Activated naive CD4-positive, alpha-beta T cell treated with anti-CD3 and anti-CD28 coated beads for 36 hours (primary cell): ENCODE measurements at regions of chr9 and their contacts with region 1.

Region 1: GRCh38 chr9:121074635-121075385 is at the start of gene CNTRL:
- DNase-seq: peak; percentile 98
- H3K4me3 Mint-ChIP-seq: peak within 1 kb of the TSS; percentile 100
- H3K27ac Mint-ChIP-seq: peak within 1 kb of the TSS; percentile 94
- H3K4me1 Mint-ChIP-seq: peaks cover 47% of the 10 kb centered on the region
- H3K27me3 Mint-ChIP-seq: no peaks in the 10 kb centered on the region
- total RNA-seq, gene CNTRL: 59.4 to 63.6 TPM

Region 2: DNA sequence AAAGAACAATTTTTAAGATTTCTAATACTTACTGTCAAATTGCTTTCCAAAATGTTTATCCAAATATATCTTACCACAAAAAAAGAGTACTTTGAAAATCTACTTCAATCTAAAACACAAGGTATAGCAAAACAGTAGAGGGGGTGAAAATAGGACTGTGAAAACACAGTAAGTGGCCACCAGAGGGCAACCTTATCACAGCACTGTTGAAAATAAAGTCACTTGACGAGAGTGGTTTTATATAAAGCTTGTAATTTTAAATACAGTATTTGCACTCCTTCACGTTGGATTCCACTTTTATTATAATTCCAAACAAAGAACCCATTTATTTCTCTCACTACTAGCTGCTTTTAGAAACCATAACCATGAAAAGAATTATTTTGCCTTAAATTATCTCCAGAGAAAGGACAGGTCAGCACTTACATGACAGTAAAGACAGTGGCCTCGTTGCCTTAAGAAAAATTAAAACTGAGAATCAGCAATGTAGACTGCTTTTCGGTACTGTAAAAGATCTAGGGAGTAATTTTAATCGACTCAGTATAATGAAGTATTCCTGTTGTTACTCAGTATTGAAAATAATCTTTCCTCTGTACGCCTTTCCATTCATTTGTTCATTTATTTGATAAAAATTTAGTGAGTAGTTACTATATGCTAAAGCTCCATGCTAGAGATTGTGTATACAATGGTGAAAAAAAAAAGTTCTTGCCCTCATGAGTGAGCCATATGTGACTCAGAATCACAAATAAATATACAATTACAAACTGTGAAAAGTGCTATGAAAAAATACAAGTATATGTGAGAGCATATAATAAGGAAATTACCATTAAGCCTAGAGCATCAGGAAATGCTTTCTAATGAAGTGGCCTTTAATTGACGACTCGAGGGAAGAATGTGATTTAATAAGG is 454.8 kb before region 1 on chr9:
- CTCF ChIA-PET with region 1: interaction called, 3 read pairs
- intact Hi-C with region 1: loop called (anchors 10 kb)
- DNase-seq: peak; percentile 82
- H3K4me3 Mint-ChIP-seq: no peak overlapping the region
- H3K27ac Mint-ChIP-seq: no peak overlapping the region
- H3K4me1 Mint-ChIP-seq: peaks cover 3% of the 10 kb centered on the region
- H3K27me3 Mint-ChIP-seq: no peaks in the 10 kb centered on the region

Region 3: GRCh38 chr9:120868676-120869359 is 206.0 kb before region 1 on chr9:
- CTCF ChIA-PET with region 1: no interaction called
- intact Hi-C with region 1: loop called (anchors 1 kb)
- DNase-seq: peak; percentile 97
- H3K4me3 Mint-ChIP-seq: peak overlapping the region; percentile 74
- H3K27ac Mint-ChIP-seq: peak overlapping the region; percentile 87
- H3K4me1 Mint-ChIP-seq: peaks cover 49% of the 10 kb centered on the region
- H3K27me3 Mint-ChIP-seq: no peaks in the 10 kb centered on the region

Region 4: DNA sequence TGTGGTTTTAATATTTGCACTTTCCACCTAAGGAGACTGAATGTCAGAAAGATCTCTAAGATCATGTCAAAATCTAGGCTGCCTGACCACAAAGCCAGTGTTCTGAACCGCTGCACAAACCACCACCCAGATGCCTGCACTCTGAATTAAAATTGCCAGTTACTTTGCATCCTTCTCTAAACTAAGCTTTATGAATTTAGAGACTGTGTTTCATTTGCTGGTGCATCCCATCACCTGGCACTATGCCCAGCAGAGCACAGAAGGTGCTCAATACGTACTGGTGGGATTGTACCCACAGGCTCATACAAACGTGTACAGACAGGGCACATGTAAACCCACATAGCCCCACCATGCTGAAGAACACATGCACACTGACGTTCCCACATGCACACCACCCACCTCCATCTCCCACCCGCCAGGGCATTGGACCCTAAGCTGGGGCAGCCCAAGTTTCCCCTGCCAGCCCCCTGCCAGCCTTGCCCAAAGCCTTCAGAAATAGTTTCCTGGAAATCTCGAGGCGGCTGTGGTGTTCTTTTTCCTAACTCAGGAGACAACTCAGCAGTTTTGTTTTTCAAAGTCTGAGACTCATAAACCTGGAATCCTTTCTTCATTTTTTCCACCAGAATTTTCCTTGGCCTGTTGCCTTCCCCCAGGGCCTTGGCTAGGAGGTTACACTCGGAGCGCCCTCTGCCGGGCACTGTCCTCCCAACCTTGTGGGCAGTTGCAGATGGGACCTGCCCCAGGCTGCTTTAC is 138.6 kb before region 1 on chr9:
- CTCF ChIA-PET with region 1: interaction called, 3 read pairs
- intact Hi-C with region 1: loop called (anchors 1 kb)
- DNase-seq: peak; percentile 97
- H3K4me3 Mint-ChIP-seq: peak overlapping the region; percentile 49
- H3K27ac Mint-ChIP-seq: peak overlapping the region; percentile 99
- H3K4me1 Mint-ChIP-seq: peaks cover 61% of the 10 kb centered on the region
- H3K27me3 Mint-ChIP-seq: no peaks in the 10 kb centered on the region

Region 5: GRCh38 chr9:121121582-121122087 is 46.8 kb after region 1 on chr9:
- CTCF ChIA-PET with region 1: interaction called, 3 read pairs
- intact Hi-C with region 1: loop called (anchors 1 kb)
- DNase-seq: peak; percentile 99
- H3K4me3 Mint-ChIP-seq: peak overlapping the region; percentile 73
- H3K27ac Mint-ChIP-seq: peak overlapping the region; percentile 91
- H3K4me1 Mint-ChIP-seq: peaks cover 44% of the 10 kb centered on the region
- H3K27me3 Mint-ChIP-seq: no peaks in the 10 kb centered on the region

Region 6: DNA sequence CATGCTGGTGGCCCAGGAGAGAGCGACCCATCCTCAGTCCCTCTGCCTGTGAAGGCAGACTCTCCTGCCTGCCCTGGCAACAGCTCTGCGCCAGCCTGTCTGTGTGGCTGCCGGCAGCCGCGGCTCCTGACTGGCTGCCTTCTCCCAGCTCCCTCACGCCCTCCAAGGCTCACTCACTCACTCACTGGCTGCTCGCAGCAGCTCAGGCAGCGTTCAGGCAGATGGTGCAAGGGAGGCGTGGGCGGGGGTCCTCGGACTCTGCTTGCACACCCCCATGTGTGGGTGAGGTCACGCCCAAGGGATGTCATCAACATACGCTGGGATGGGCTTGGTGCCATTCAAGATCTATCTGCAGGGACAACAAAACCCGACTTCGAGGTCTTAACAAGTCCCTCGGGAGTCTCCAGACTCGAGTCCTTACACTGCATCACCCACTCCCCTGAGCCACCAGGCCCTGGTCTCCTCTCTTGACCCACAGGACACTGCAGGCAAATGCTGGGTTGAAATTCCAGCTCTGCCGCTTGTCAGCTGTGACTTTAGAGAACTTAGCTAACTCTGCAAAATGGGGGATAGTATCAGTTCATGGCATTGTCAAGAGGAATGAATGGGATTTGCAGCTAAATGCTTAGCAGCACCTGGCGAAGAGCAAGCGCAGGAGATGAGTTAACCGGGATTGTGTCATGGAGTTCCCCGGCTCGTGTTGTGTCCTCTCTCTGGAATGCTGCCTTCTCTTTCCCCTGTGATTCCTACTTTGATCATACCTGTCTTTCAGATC is 643.5 kb after region 1 on chr9:
- CTCF ChIA-PET with region 1: no interaction called
- intact Hi-C with region 1: no loop called
- DNase-seq: no peak
- H3K4me3 Mint-ChIP-seq: no peak overlapping the region
- H3K27ac Mint-ChIP-seq: no peak overlapping the region
- H3K4me1 Mint-ChIP-seq: no peaks in the 10 kb centered on the region
- H3K27me3 Mint-ChIP-seq: no peaks in the 10 kb centered on the region